ENCODE measurements at regions of chr9 and their contacts with region 1.

Region 1: DNA sequence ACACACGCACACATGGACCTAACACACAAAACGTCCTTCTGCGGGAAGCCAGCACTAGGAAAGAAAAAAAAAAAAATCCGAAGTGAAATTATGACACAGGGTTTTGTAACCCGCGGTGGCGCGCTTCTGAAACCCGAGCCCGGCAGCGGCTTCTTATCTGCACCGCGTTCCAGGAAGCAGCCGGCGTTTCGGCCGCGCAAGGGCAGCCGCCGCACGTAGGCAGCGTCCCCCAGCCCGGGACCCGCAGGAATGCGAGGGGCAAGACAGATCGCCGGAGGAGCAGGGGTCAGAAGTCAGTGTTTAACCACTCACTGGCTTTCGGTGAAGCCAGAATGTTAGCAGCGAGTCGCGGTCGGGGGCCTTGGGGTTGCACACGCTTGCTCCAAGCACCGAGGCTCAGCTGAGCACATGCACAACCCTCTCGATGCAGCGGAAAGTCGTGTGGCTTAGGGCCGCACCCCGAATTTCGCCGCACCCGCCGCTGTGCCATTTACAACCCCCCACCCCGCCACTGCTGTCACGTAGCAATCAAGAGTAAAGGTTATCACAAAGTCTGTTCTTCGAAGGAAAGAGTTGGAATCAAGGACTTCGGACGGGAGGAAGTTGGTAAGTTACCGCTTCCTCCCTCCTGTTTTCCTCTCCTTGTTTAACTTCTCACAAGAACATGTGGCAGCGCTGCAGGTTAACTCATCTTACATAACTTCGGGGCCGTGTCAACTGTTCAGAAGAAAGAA is 167.9 kb downstream of the AUH start:
- DNase-seq: peak; percentile 94 to 95
- ATAC-seq: peak; percentile 83
- H3K4me3 ChIP-seq: no peak overlapping the region
- H3K27ac ChIP-seq: peak overlapping the region; percentile 92 to 99
- H3K4me1 ChIP-seq: no peaks in the 10 kb centered on the region
- H3K27me3 ChIP-seq: no peaks in the 10 kb centered on the region

Region 2: DNA sequence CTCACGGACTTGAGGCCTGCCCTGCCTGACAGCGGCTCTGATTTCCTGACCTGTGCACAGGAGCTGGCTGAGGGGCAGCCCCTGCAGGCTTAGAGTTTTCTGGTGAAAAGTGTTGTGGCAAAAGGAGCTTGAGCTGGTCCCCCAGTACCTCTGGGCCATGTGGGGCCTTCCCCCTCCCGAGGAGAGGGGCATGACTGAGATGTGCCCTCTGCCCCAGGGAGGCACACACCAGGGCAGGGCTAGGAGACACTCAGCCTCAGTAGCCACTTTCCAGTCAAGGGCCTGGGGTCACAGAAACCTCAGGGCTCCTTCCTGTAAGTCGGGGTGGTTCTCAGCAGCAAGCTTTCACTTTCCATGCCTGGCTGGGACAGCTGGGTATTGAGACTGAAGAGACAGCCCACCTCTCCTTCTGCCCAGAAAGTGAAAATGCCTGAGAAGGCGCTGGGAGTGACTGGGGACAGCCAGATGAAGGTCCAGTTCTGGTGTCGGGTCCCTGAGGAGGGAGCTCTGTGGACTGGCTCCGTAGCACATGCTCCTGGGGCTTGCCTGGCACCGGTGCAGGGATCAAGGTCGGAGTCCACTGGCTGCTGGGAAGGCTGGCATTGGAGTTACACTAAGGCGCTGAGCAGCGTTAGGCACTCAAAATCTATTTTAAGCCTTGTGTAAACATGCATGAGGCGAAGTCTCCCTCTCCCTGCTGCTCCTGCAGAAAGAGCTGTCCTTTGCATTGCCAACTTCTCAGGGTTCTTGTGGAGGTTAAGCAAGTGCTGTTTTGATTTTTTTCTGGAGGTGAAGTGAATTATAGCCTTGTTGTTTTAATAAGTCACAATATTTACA is 1194.1 kb before region 1 on chr9:
- intact Hi-C with region 1: loop called in 1 of 2 experiments (anchors 10 kb)
- DNase-seq: peak; percentile 87 to 89
- ATAC-seq: peak; percentile 84
- H3K4me3 ChIP-seq: no peak overlapping the region
- H3K27ac ChIP-seq: peak overlapping the region in 1 of 2 donors; percentile 83
- H3K4me1 ChIP-seq: peaks cover 8 to 10% of the 10 kb centered on the region in 2 donors
- H3K27me3 ChIP-seq: no peaks in the 10 kb centered on the region

Region 3: DNA sequence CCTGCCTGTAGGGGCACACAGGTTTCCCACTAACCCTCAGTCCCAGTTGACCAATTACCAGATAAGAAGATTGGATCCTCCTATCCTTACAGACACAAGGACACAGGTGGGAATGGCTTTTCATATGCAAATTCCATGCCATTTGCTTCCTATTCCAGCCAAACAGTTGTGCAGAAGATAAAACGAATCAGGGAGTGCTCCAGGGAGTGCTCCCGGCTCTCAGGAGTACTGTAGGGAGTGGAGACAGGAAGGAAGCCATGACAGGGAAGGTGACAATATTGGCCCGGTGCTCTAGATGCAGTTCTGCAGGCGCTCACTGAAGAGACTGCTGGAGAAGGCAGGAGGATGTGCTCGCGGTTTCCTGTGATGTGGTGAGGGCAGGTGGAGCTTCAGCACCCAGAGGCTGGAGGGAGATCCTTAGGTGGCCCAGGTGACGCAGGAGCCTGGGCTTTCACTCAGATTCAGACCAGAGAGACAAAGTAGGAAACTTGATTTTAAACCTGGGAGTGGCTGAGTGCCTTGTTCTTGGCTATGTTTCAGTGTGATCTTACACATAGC is 92.1 kb before region 1 on chr9:
- intact Hi-C with region 1: loop called (anchors 1 to 5 kb)
- DNase-seq: no peak
- ATAC-seq: no peak
- H3K4me3 ChIP-seq: no peak overlapping the region
- H3K27ac ChIP-seq: peak overlapping the region in 1 of 2 donors; percentile 91
- H3K4me1 ChIP-seq: peaks cover 0 to 6% of the 10 kb centered on the region in 2 donors
- H3K27me3 ChIP-seq: no peaks in the 10 kb centered on the region

Region 4: DNA sequence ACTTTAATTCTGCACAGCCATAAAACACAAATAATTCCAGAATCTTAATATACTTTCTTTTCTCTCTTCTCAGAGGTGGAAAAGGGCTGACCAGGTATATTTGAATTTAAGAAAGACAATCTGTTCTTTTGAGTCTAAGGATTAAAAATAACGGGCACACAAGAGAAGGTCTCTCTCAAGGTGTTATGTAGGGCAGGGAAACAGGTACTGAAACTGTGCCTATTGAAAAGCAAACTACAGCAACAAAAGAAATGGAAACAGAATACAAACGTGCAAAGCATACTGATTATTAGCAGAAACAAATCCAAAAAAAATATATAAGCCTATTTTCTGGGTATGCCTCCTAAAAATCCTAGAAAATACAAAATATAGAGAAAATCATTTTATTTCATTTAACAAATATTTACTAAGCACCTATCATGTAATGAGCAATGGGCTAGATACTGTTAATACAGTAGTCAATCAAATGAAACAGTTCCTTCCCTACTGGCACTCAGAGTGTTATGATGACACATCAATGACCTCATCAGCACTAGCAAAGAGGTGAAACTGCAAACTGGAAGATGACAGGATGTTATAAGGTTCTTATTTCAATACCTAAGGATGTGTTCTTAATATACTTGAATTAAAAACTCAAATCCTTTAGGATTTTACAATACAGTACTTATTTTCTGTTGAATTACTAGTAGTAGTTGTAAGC is 80.2 kb after region 1 on chr9:
- intact Hi-C with region 1: no loop called
- DNase-seq: no peak
- ATAC-seq: no peak
- H3K4me3 ChIP-seq: no peak overlapping the region
- H3K27ac ChIP-seq: no peak overlapping the region
- H3K4me1 ChIP-seq: peaks cover 0 to 3% of the 10 kb centered on the region in 2 donors
- H3K27me3 ChIP-seq: no peaks in the 10 kb centered on the region

Region 5: DNA sequence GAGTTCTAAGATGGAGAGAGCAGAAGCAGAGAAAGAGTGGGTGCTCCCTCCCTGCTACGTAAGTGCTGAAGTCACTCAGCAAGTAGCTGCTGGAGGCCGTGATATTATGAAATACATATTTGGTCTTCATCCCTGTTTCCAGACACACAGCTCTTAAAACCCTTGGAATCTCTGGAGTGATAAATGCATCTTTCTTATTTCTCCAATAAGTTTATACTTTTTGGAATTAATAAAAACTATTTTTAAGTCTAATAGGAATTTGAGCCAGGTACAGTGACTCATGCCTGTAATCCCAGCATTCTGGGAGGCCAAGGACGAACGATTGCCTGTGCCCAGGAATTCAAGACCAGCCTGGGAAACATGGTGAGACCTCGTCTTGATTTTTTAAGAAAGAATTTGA is 107.3 kb after region 1 on chr9:
- intact Hi-C with region 1: loop called (anchors 5 kb)
- DNase-seq: no peak
- ATAC-seq: peak; percentile 76
- H3K4me3 ChIP-seq: no peak overlapping the region
- H3K27ac ChIP-seq: peak overlapping the region; percentile 57 to 98
- H3K4me1 ChIP-seq: peaks cover 3 to 9% of the 10 kb centered on the region in 2 donors
- H3K27me3 ChIP-seq: no peaks in the 10 kb centered on the region

Region 6: GRCh38 chr9:91483189-91483691 is 289.4 kb after region 1 on chr9:
- intact Hi-C with region 1: loop called in 1 of 2 experiments (anchors 2 kb)
- DNase-seq: peak in 1 of 2 donors; percentile 76
- ATAC-seq: peak; percentile 83
- H3K4me3 ChIP-seq: no peak overlapping the region
- H3K27ac ChIP-seq: peak overlapping the region; percentile 6 to 73
- H3K4me1 ChIP-seq: peaks cover 0 to 4% of the 10 kb centered on the region in 2 donors
- H3K27me3 ChIP-seq: no peaks in the 10 kb centered on the region